AG04449 (cell line): ENCODE measurements at regions of chr4 and their contacts with region 1.

Region 1: DNA sequence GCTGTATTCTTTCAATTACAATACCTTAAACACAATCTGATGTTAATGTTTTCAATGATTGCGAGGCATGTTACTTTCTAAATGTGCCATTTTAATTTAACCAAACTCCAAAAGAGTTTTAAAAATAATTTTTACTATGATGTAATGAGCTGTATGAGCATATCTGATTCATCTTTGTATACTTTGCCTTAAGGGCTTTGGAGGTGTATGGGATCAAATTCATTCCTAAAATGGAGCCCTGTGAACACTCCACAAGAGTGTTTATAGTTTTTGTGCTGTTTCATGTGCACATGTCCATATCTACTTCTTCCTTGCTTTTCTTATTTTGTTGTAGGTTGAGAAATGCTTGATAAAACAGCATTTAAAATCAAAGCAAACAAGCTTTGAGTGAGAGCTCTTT is 82.4 kb downstream of the ATP10D start:
- DNase-seq: no peak
- H3K4me3 ChIP-seq: no peak overlapping the region
- CTCF ChIP-seq: no peak

Region 2: GRCh38 chr4:47463235-47463956 is 104.1 kb before region 1 on chr4 and contains the start of gene COMMD8:
- CTCF ChIA-PET with region 1: interaction called, 22 read pairs
- POLR2A ChIA-PET with region 1: no interaction called
- DNase-seq: no peak
- H3K4me3 ChIP-seq: peak within 1 kb of the TSS; percentile 76
- CTCF ChIP-seq: peak; percentile 59

Region 3: GRCh38 chr4:47538495-47539154 is 28.9 kb before region 1 on chr4:
- CTCF ChIA-PET with region 1: interaction called, 24 read pairs
- POLR2A ChIA-PET with region 1: no interaction called
- DNase-seq: no peak
- H3K4me3 ChIP-seq: no peak overlapping the region
- CTCF ChIP-seq: no peak

Region 4: DNA sequence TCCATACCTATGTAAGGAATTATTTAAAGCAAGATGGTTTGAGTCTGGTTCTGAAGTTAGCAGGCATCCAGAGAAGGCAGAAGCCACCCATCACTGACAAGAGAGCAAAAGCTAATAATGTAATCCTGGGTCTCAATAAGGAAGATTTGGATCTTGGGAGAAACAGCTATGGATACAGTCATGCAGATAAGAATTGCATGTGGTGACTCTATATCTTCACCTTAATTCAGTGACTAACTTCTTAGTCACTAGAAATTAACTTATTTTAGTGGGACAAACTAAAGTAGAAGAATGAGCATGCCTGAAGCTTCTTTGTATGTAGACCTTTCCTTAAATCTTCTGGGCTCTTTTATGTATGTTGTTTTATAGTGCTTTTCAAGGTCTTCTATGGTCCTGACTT is 15.8 kb before region 1 on chr4:
- CTCF ChIA-PET with region 1: interaction called, 35 read pairs
- POLR2A ChIA-PET with region 1: no interaction called
- DNase-seq: no peak
- H3K4me3 ChIP-seq: no peak overlapping the region
- CTCF ChIP-seq: no peak